ENCODE measurements at regions of chr9 and their contacts with region 1.

Region 1: DNA sequence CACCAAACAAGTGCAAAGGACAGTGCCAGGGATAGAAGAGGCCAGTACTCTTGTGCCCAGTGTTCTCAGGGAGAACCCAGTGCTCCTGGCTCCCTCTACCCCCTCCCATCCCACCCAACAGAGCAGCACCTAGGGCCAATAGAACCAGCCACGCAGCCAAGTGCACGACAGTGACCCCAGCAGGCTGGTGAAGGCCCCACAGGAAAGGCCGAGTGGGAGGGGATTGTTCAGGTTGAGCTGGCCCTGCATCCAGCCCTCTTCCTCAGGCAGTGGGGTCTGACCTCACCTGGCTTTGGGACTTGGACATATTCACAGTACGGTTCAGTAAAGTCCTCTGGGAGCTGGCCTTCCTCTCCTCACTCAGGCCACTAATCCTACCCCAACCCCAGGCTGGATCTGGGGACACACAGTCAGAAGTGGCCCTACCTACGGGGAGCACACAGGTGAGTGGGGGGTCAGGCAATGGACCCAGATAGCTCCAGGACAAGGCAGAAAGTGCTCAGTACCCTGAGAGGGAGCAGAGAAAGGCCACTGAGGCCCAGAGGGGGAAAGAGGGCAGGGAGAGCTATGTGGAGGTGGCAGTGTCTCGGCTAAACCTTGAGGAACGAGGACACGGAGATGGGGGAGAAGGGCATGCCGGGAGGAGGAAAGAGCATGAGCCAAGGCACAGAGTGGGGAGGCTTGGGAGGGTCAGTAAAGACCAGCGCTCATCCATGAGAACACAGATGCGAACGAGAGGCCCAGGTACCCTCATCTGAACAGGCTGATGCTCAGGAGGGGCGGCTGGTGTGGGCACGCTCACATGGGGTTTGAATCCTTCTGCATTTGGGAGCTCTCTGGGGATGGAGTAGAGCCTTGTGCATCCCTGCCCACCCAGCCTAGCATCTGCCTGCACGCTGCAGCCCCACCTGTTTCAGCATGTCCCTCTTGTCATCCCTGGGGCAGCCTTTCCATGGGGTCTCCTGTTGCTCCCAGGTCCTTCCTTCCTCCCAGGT is 25.6 kb downstream of the POLR1E start:
- DNase-seq: no peak
- ATAC-seq: peak; percentile 78
- H3K4me3 Mint-ChIP-seq: no peak overlapping the region
- H3K27ac Mint-ChIP-seq: no peak overlapping the region
- H3K4me1 Mint-ChIP-seq: peaks cover 8% of the 10 kb centered on the region
- H3K27me3 Mint-ChIP-seq: no peaks in the 10 kb centered on the region
- CTCF ChIP-seq: no peak

Region 2: GRCh38 chr9:36798350-36799065 is 712.8 kb before region 1 on chr9:
- CTCF ChIA-PET with region 1: no interaction called
- POLR2A ChIA-PET with region 1: no interaction called
- intact Hi-C with region 1: no loop called
- DNase-seq: no peak
- ATAC-seq: no peak
- H3K4me3 Mint-ChIP-seq: no peak overlapping the region
- H3K27ac Mint-ChIP-seq: no peak overlapping the region
- H3K4me1 Mint-ChIP-seq: no peaks in the 10 kb centered on the region
- H3K27me3 Mint-ChIP-seq: peaks cover 17% of the 10 kb centered on the region
- CTCF ChIP-seq: no peak

Region 3: DNA sequence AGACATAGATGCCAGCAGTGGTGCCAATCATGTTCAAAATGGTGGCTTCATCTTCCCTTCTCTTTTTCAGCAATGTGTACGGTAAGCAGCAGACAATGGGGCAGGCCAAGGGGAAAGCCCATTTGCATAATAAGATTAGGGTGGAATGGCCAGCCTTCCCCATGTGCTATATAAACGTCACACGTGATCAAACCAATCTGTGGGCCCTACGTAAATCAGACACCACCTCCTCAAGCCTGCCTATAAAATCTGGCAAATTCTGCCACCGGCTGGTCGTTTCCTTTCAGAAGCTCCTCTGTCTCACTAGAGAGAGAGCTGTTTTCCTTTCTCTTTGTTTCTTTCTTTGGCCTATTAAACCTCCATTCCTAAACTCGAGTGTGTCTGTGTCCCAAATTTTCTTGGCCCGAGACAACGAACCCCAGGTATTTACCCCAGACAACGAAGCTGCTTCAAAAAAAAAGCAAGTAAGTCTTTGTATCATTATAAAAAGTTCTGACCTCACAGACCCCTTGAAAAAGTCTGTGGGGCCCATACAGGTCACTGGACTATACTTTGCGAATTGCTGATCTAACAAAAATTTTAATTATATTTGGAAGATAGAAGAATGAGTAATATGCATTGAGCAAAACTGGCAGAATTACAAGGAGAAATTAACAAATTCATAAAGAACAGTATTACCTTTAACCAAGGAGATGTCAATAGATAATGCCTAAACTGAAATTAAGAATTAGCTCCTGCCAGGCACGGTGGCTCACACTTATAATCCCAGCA is 61.3 kb before region 1 on chr9:
- CTCF ChIA-PET with region 1: no interaction called
- POLR2A ChIA-PET with region 1: no interaction called
- intact Hi-C with region 1: no loop called
- DNase-seq: no peak
- ATAC-seq: no peak
- H3K4me3 Mint-ChIP-seq: no peak overlapping the region
- H3K27ac Mint-ChIP-seq: no peak overlapping the region
- H3K4me1 Mint-ChIP-seq: peaks cover 40% of the 10 kb centered on the region
- H3K27me3 Mint-ChIP-seq: no peaks in the 10 kb centered on the region
- CTCF ChIP-seq: no peak

Region 4: GRCh38 chr9:37496020-37496419 is 15.3 kb before region 1 on chr9:
- CTCF ChIA-PET with region 1: no interaction called
- POLR2A ChIA-PET with region 1: interaction called, 10 read pairs
- intact Hi-C with region 1: no loop called
- DNase-seq: no peak
- ATAC-seq: no peak
- H3K4me3 Mint-ChIP-seq: no peak overlapping the region
- H3K27ac Mint-ChIP-seq: no peak overlapping the region
- H3K4me1 Mint-ChIP-seq: no peaks in the 10 kb centered on the region
- H3K27me3 Mint-ChIP-seq: no peaks in the 10 kb centered on the region
- CTCF ChIP-seq: no peak

Measured in activated B cell treated with CpG ODN at 0.5 μM for 24 hours (primary cell).